ENCODE measurements at regions of chr16 and their contacts with region 1.

Region 1: GRCh38 chr16:23877107-23878090 is 41.6 kb downstream of the PRKCB start:
- DNase-seq: peak; percentile 48
- H3K4me3 ChIP-seq: no peak overlapping the region
- H3K27ac ChIP-seq: peak overlapping the region; percentile 73
- H3K4me1 ChIP-seq: peaks cover 62% of the 10 kb centered on the region
- H3K27me3 ChIP-seq: no peaks in the 10 kb centered on the region
- CTCF ChIP-seq: peak; percentile 62

Region 2: GRCh38 chr16:23223368-23223767 is 654.0 kb before region 1 on chr16:
- CTCF ChIA-PET with region 1: no interaction called
- POLR2A ChIA-PET with region 1: interaction called, 10 read pairs
- intact Hi-C with region 1: no loop called
- DNase-seq: no peak
- H3K4me3 ChIP-seq: no peak overlapping the region
- H3K27ac ChIP-seq: no peak overlapping the region
- H3K4me1 ChIP-seq: no peaks in the 10 kb centered on the region
- H3K27me3 ChIP-seq: no peaks in the 10 kb centered on the region
- CTCF ChIP-seq: no peak

Region 3: DNA sequence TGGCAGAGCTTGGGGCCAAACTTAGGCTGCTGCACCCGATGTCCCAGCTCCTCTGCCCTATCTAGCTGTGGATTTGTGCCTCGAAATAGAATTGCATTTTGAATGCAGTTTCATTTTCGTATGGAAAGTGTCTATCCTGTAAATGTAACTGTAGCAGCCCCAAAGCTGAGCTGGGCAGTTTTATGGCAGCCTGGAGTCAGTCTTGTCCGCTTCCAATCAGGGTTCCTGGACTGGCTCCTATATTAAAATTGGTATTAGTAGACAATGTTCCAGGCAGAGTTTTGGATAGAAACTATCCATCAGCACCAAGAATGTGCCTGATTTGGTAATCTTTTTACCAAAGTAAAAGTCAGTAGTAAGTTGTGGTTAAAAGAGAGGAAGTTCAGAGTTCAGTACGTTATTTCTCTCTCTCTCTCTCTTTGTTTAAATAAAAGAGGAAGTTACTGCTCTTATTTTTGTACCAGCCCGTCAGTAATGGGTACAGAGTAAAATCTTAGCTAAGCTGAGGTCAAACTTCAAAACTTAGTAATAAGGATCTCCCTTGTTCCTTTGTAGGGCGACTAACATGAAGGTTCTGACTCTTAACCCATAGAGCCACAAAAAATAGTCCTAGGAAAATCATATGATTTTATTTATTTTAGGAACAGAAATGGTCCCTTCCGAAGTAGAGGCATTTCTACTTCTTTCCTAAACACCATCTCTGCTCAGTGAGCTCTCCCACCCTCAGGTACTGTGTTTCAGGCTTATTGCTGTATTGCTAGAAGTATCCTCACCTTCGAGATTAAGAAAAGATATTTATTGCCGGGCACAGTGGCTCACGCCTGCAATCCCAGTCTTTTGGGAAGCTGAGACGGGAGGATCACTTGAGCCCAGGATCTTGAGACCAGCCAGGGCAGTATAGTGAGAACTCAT is 13.6 kb before region 1 on chr16:
- CTCF ChIA-PET with region 1: interaction called, 12 read pairs
- POLR2A ChIA-PET with region 1: interaction called, 3 read pairs
- intact Hi-C with region 1: no loop called
- DNase-seq: no peak
- H3K4me3 ChIP-seq: peak overlapping the region; percentile 19
- H3K27ac ChIP-seq: peak overlapping the region; percentile 77
- H3K4me1 ChIP-seq: peaks cover 93% of the 10 kb centered on the region
- H3K27me3 ChIP-seq: no peaks in the 10 kb centered on the region
- CTCF ChIP-seq: no peak

Region 4: DNA sequence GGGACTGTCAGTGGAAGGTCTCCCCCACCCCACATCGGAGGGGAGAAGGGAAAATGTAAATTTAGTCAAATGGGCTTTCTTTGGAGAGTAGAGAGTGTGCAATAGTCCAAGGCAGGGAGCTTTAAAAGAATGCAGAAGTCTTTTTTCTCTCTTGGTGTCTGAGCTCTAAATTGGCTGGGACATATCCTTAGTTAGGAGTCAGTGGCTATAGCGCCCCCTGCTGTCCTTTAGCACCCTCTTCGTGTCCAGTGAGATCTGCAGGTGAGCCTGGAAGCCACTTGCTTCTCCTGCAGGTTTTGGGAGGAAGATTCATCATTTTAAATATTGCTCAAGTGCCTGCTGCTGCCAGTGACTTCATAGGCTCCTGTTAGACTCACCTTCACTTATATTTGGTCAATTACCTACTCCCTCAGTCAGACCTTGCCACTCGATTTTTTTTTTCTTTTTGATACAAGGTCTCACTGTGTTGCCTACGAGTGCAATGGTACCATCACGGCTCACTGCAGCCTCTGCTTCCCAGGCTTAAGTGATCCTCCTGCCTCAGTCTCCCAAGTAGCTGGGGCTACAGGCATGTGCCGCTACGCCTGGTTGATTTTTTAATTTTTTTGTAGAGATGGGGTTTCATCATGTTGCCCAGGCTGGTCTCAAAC is 133.2 kb after region 1 on chr16:
- CTCF ChIA-PET with region 1: interaction called, 43 read pairs
- POLR2A ChIA-PET with region 1: no interaction called
- intact Hi-C with region 1: loop called (anchors 1 kb)
- DNase-seq: peak; percentile 90
- H3K4me3 ChIP-seq: no peak overlapping the region
- H3K27ac ChIP-seq: peak overlapping the region; percentile 50
- H3K4me1 ChIP-seq: peaks cover 59% of the 10 kb centered on the region
- H3K27me3 ChIP-seq: no peaks in the 10 kb centered on the region
- CTCF ChIP-seq: peak; percentile 90

Region 5: DNA sequence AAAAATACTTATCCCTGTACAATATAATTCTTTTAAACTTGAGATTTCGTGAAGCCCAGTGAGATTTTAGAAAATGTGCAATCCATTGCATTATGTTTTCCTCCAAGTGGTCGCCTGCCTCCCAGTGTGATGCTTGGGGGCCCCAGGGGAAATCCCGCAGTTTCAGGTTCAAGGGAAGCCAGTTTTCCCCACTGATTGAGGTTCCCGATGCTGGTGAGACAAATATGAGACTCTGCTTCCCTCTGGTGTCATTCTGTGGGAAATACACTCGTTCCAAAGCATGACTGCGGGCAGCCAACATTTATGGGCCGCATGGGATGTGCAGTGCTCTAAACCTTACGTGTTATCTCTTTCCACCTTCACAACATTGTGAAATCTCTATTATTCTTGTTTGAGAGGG is 159.2 kb after region 1 on chr16:
- CTCF ChIA-PET with region 1: interaction called, 22 read pairs
- POLR2A ChIA-PET with region 1: no interaction called
- intact Hi-C with region 1: loop called (anchors 1 kb)
- DNase-seq: peak; percentile 88
- H3K4me3 ChIP-seq: no peak overlapping the region
- H3K27ac ChIP-seq: peak overlapping the region; percentile 57
- H3K4me1 ChIP-seq: peaks cover 22% of the 10 kb centered on the region
- H3K27me3 ChIP-seq: no peaks in the 10 kb centered on the region
- CTCF ChIP-seq: peak; percentile 78

Region 6: DNA sequence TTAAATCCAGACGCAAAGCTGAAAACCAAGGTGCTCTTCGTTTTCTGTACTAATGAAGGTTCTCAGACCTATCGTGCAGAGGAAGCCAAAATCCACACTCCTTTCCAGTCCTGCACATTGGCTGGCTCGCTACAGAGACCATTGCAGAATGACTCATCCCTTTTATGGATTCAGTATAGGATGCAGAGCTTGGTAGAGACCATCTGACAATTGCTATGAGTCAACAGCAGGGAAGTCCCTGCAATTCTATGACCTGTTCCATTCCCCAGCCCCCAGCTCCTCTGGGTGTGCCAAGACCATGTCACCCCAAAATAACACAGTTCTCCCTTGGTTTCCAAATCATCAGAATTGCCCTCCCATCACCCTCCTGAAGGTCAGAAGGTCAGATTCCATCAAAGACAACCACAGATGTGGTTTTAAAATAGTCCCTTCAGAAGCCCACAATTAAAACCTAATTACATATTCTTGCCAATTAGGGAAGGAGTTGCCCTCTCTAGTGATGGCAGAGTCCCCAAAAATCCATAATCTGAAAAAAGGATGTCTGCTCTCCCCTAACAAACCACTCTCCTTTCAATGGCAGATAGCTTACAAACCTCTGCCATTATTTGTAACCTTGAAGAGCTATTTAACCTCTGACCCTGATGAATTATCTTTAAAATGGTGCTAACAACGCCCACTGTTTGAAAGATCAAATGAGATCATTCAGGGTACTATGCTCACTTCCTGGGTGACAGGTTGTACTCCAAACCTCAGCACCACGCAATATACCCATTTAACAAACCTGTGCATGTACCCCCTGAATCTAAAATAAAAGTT is 553.8 kb after region 1 on chr16:
- CTCF ChIA-PET with region 1: interaction called, 11 read pairs
- POLR2A ChIA-PET with region 1: no interaction called
- intact Hi-C with region 1: no loop called
- DNase-seq: peak; percentile 75
- H3K4me3 ChIP-seq: no peak overlapping the region
- H3K27ac ChIP-seq: no peak overlapping the region
- H3K4me1 ChIP-seq: peaks cover 31% of the 10 kb centered on the region
- H3K27me3 ChIP-seq: no peaks in the 10 kb centered on the region
- CTCF ChIP-seq: no peak